SK-N-SH (cell line): ENCODE measurements at regions of chr12 and their contacts with region 1.

Region 1: DNA sequence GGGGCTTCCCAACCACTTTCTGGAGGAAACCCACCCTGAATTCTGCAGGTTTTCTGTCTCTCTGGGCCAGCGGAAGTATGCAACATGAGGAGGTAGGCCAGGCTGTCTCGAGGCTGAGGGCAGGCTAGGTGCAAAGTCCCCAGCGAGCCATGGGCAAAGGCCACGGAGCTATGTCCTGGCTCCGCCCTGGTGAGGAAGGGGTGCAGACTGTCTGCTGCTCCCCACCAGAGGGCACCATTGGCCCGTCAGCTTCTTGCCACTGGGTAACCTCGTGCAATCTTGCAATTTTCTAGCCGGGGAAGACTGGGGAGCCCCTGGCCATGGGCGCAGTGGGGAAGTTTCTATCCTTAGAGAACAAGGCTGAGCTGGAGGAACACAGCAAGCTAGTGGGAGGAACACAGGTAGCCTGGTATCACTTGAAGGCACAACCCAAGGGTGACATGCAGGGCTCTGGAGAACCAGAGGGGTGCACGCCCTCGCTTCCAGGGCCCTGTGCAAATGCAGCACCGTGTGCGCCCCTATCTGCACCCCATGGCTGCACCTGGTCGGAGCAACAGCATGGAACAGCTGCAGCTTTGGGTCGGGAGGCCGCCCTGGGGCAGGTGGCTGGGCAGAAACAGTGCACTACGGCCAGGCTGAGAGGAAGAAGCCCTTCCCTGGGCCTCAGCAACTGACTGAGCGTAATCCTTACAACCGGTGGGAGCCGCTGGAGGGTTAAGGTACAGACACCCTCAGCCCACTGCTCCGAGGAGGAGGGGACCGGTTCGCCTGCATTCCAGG is 27.6 kb upstream of the RPLP0 start:
- DNase-seq: peak; percentile 91
- H3K4me3 ChIP-seq: peak overlapping the region in 1 of 2 experiments; percentile 44; a peak in 1 of 4 replicates
- H3K27ac ChIP-seq: peak overlapping the region; percentile 95 to 100; a peak in 3 of 4 replicates
- H3K4me1 ChIP-seq: peaks cover 58 to 74% of the 10 kb centered on the region in 2 experiments
- H3K27me3 ChIP-seq: no peaks in the 10 kb centered on the region
- CTCF ChIP-seq: peak; percentile 90
- EP300 ChIP-seq: no peak
- RAD21 ChIP-seq: peak; percentile 97

Region 2: DNA sequence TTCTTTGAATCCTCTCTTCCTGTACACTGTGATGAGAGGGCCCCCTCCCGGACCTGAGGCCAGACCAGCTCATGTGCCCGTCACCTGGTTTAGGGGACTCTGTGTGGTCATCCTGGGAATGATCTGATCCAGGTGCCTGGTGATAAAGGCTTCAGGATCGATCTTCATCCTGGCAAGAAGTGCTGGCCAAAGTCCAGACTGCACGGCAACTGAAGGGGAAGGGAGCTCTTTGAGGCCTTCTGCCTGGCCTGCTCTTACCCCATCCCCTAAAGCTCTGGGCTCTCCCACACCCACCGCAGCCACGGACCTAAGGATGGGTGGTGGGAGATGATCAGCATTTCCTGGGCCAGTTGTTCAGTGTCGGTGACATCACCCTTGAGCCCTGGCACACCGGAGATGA is 65.7 kb before region 1 on chr12:
- CTCF ChIA-PET with region 1: no interaction called
- POLR2A ChIA-PET with region 1: no interaction called
- DNase-seq: no peak
- H3K4me3 ChIP-seq: no peak overlapping the region
- H3K27ac ChIP-seq: no peak overlapping the region
- H3K4me1 ChIP-seq: no peaks in the 10 kb centered on the region
- H3K27me3 ChIP-seq: no peaks in the 10 kb centered on the region
- CTCF ChIP-seq: no peak
- EP300 ChIP-seq: no peak
- RAD21 ChIP-seq: no peak

Region 3: DNA sequence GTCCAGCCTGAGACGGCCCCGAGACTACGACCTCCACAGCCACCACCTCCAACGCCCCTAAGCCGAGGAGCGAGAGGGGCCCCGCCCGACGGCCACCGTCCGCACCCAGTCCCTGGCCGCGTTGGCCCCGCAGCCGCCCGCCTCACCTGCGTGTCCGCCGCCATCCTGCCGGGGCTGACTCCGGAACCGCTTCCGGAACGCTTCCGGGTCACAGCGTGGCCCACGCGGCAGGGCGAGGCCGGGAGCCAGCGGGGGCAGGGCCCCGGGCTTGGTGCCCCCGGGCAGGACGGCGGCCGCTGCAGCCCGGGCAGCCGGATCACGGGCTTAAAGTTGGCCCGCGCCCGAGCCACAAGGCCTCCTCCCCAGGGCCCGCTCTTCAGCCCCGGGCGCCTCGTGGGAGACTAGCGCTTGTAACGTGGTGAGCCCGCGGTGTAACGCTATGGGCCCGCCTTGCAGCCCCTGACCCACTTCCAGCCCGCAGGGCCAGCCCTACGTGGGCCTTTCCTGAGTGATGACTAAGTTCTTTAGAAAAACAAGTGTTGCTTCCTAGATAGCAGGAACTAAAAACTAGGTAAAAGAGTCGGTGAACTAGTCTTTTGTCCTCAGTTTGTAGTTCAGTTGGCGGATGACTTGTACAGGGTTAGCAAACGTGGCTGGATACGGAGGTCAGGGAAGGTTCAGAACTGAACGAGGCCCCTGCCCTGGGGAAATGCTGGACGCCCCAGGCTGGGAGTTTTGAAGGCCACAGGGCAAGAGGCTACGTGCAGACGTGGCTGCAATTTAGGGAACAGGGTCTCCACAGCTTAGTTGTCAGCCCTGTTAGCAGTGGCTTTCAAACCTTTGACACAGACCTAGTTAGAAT is 33.7 kb before region 1 on chr12 and contains the start of gene GCN1:
- CTCF ChIA-PET with region 1: interaction called, 116 read pairs
- POLR2A ChIA-PET with region 1: interaction called, 75 read pairs
- DNase-seq: peak; percentile 94
- H3K4me3 ChIP-seq: peak within 1 kb of the TSS; percentile 67 to 88
- H3K27ac ChIP-seq: peak within 1 kb of the TSS; percentile 86 to 93
- H3K4me1 ChIP-seq: peaks cover 23 to 35% of the 10 kb centered on the region in 2 experiments
- H3K27me3 ChIP-seq: no peaks in the 10 kb centered on the region
- CTCF ChIP-seq: no peak
- EP300 ChIP-seq: no peak; a peak in 1 of 4 replicates
- RAD21 ChIP-seq: no peak
- polyA plus RNA-seq, gene GCN1: 41.2 and 54.4 TPM in 2 replicates

Region 4: GRCh38 chr12:120249875-120250795 is 21.7 kb after region 1 on chr12:
- CTCF ChIA-PET with region 1: interaction called, 618 read pairs
- POLR2A ChIA-PET with region 1: interaction called, 3 read pairs
- DNase-seq: no peak
- H3K4me3 ChIP-seq: no peak overlapping the region
- H3K27ac ChIP-seq: peak overlapping the region in 1 of 2 experiments; percentile 93; a peak in 2 of 4 replicates
- H3K4me1 ChIP-seq: peaks cover 13 to 52% of the 10 kb centered on the region in 2 experiments
- H3K27me3 ChIP-seq: no peaks in the 10 kb centered on the region
- CTCF ChIP-seq: no peak
- EP300 ChIP-seq: no peak
- RAD21 ChIP-seq: no peak

Region 5: GRCh38 chr12:120276734-120277133 is 48.3 kb after region 1 on chr12:
- CTCF ChIA-PET with region 1: interaction called, 618 read pairs
- POLR2A ChIA-PET with region 1: no interaction called
- DNase-seq: no peak
- H3K4me3 ChIP-seq: no peak overlapping the region
- H3K27ac ChIP-seq: no peak overlapping the region
- H3K4me1 ChIP-seq: no peaks in the 10 kb centered on the region
- H3K27me3 ChIP-seq: no peaks in the 10 kb centered on the region
- CTCF ChIP-seq: no peak
- EP300 ChIP-seq: no peak
- RAD21 ChIP-seq: no peak

Region 6: GRCh38 chr12:120292661-120293531 is 64.4 kb after region 1 on chr12 and contains the start of gene RNU4-1:
- CTCF ChIA-PET with region 1: interaction called, 25 read pairs
- POLR2A ChIA-PET with region 1: interaction called, 108 read pairs
- DNase-seq: peak; percentile 57
- H3K4me3 ChIP-seq: peak within 1 kb of the TSS; percentile 50 to 70
- H3K27ac ChIP-seq: peak within 1 kb of the TSS; percentile 98 to 100
- H3K4me1 ChIP-seq: peaks cover 0 to 2% of the 10 kb centered on the region in 2 experiments; a peak in 2 of 4 replicates
- H3K27me3 ChIP-seq: no peaks in the 10 kb centered on the region
- CTCF ChIP-seq: no peak
- EP300 ChIP-seq: peak in 1 of 2 experiments; percentile 67; a peak in 1 of 4 replicates
- RAD21 ChIP-seq: no peak
- polyA plus RNA-seq, gene RNU4-1: not detected in 2 replicates

Region 7: GRCh38 chr12:120317224-120318105 is 89.0 kb after region 1 on chr12:
- CTCF ChIA-PET with region 1: interaction called, 10 read pairs
- POLR2A ChIA-PET with region 1: interaction called, 3 read pairs
- DNase-seq: peak; percentile 96
- H3K4me3 ChIP-seq: peak overlapping the region; percentile 57 to 86
- H3K27ac ChIP-seq: peak overlapping the region; percentile 40 to 72; a peak in 3 of 4 replicates
- H3K4me1 ChIP-seq: peaks cover 4 to 5% of the 10 kb centered on the region in 2 experiments; a peak in 2 of 4 replicates
- H3K27me3 ChIP-seq: no peaks in the 10 kb centered on the region
- CTCF ChIP-seq: peak; percentile 69
- EP300 ChIP-seq: no peak
- RAD21 ChIP-seq: peak; percentile 31; the same call in 1 of the 2 replicates

Region 8: GRCh38 chr12:120640840-120641833 is 412.7 kb after region 1 on chr12:
- CTCF ChIA-PET with region 1: no interaction called
- POLR2A ChIA-PET with region 1: no interaction called
- DNase-seq: peak; percentile 71
- H3K4me3 ChIP-seq: peak overlapping the region; percentile 38 to 48; a peak in 3 of 4 replicates
- H3K27ac ChIP-seq: no peak overlapping the region
- H3K4me1 ChIP-seq: peaks cover 0 to 6% of the 10 kb centered on the region in 2 experiments; a peak in 1 of 4 replicates
- H3K27me3 ChIP-seq: peaks cover 58% of the 10 kb centered on the region
- CTCF ChIP-seq: no peak
- EP300 ChIP-seq: no peak
- RAD21 ChIP-seq: no peak